Uterus (tissue), 4 donors: ENCODE measurements at regions of chr16 and their contacts with region 1.

Region 1: GRCh38 chr16:87540945-87541877 is 48.4 kb upstream of the ZCCHC14 start:
- DNase-seq: no peak
- H3K4me3 ChIP-seq: no peak overlapping the region
- H3K27ac ChIP-seq: no peak overlapping the region
- H3K4me1 ChIP-seq: no peaks in the 10 kb centered on the region
- H3K27me3 ChIP-seq: peaks cover 0 to 13% of the 10 kb centered on the region in 2 donors
- CTCF ChIP-seq: no peak
- POLR2A ChIP-seq: no peak

Region 2: DNA sequence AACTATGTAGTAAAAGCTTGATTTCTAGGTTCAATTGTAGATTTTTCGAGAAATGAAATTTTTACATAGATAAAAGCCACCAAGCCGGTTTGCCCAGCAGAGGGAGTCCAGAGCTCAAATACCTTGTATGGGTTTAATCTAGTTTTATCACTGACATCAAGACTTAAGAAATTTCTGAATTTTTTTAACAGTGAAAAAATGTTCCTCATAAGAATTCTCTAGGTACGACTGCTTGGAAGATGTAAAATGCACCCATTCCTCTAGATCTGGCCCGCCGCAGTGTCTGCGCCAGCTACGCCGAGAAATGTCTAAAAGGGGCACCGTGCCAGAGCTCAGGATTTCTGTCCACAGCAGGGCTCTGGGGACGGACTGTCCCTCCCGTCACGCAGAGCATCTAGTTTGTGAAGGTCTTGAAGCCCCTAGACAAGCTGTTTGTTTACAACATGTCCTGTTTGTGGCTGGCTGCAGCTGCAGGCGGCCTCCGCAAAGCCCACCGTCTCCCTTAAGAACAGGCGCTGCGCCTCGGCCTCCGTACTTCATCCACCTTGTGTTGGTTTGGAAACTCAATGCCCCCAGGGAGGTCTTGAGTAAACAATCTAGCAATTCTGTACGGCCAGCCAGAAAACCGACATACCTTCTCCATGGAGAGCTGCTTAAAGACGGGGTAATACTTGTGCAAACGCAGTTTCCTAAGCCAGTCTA is 124.2 kb before region 1 on chr16:
- intact Hi-C with region 1: loop called (anchors 5 kb)
- DNase-seq: peak; percentile 47 to 56
- H3K4me3 ChIP-seq: no peak overlapping the region
- H3K27ac ChIP-seq: no peak overlapping the region
- H3K4me1 ChIP-seq: no peaks in the 10 kb centered on the region
- H3K27me3 ChIP-seq: no peaks in the 10 kb centered on the region
- CTCF ChIP-seq: peak; percentile 57 to 71 (median 64)
- POLR2A ChIP-seq: no peak